AG04449 (cell line): ENCODE measurements at regions of chr1 and their contacts with region 1.

Region 1: GRCh38 chr1:112390775-112391602 is 5.0 kb upstream of the CTTNBP2NL start:
- DNase-seq: peak; percentile 67
- H3K4me3 ChIP-seq: peak overlapping the region; percentile 50
- CTCF ChIP-seq: peak; percentile 79

Region 2: GRCh38 chr1:112369392-112370285 is 21.4 kb before region 1 on chr1:
- CTCF ChIA-PET with region 1: interaction called, 30 read pairs
- POLR2A ChIA-PET with region 1: no interaction called
- DNase-seq: no peak
- H3K4me3 ChIP-seq: no peak overlapping the region
- CTCF ChIP-seq: peak; percentile 99

Region 3: DNA sequence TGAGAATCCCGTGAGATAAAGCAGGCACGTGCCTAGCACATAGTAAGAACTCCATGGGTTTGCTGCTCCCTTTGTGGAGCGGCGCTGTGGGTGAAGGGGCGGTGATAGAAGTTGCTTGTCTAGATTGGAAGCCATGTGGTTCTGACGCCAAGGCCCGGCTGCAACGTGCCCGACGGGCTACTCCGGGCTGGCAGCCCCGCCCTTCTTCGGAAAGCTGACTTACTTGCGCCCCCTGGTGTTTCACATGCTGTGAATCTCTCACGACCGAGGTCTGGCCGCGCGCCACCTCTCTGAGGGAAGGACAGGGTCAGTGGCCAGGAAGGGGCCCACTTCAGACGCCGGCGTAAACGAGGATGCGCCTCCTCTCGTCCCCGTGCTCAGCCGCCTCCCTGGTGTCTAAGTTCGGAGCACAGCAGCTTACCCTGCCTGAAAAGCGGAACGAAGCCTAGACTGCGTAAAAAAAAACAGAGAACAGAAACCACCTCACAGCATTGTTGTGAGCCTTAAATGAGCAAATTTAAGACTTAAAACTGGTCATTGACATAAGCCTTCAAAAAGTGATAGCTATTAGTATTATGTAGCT is 75.2 kb after region 1 on chr1:
- CTCF ChIA-PET with region 1: interaction called, 250 read pairs
- POLR2A ChIA-PET with region 1: interaction called, 9 read pairs
- DNase-seq: peak; percentile 74
- H3K4me3 ChIP-seq: peak overlapping the region; percentile 46
- CTCF ChIP-seq: peak; percentile 88

Region 4: GRCh38 chr1:112544011-112544688 is 153.2 kb after region 1 on chr1:
- CTCF ChIA-PET with region 1: interaction called, 15 read pairs
- POLR2A ChIA-PET with region 1: interaction called, 4 read pairs
- DNase-seq: peak; percentile 87
- H3K4me3 ChIP-seq: no peak overlapping the region
- CTCF ChIP-seq: no peak

Region 5: GRCh38 chr1:112557385-112557784 is 166.4 kb after region 1 on chr1:
- CTCF ChIA-PET with region 1: no interaction called
- POLR2A ChIA-PET with region 1: no interaction called
- DNase-seq: no peak
- H3K4me3 ChIP-seq: no peak overlapping the region
- CTCF ChIP-seq: no peak

Region 6: DNA sequence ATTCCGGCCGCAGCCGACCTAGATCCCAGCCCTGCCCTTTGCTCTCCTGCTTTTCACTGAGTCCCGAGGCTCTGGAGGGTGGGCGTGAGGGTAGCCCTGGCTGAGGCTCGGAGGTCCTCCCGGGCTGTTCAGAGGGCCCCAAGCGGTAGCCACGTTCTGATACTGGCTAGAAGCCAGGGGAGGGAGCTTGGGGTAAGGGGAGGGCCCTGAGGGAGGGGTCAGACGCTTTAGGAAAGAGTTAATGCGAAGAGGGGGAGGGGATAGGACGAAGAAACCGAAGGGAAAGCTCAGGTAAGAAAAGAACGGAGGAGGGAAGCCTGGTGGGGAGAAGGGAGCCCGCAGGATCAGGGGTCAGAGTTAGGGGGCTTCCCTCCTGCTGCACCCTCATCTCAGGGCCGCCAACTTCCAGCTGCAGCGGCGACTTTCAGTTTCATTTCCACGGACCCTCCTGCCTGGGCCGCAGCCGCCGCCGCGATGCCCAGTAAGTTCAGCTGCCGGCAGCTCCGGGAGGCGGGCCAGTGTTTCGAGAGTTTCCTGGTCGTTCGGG is 283.5 kb after region 1 on chr1 and contains the start of gene MOV10:
- CTCF ChIA-PET with region 1: interaction called, 26 read pairs
- POLR2A ChIA-PET with region 1: interaction called, 8 read pairs
- DNase-seq: no peak
- H3K4me3 ChIP-seq: peak within 1 kb of the TSS; percentile 87
- CTCF ChIP-seq: no peak

Region 7: GRCh38 chr1:113721010-113721409 is 1330.0 kb after region 1 on chr1:
- CTCF ChIA-PET with region 1: no interaction called
- POLR2A ChIA-PET with region 1: no interaction called
- DNase-seq: no peak
- H3K4me3 ChIP-seq: no peak overlapping the region
- CTCF ChIP-seq: no peak